ENCODE measurements at regions of chr11 and their contacts with region 1.

Region 1: DNA sequence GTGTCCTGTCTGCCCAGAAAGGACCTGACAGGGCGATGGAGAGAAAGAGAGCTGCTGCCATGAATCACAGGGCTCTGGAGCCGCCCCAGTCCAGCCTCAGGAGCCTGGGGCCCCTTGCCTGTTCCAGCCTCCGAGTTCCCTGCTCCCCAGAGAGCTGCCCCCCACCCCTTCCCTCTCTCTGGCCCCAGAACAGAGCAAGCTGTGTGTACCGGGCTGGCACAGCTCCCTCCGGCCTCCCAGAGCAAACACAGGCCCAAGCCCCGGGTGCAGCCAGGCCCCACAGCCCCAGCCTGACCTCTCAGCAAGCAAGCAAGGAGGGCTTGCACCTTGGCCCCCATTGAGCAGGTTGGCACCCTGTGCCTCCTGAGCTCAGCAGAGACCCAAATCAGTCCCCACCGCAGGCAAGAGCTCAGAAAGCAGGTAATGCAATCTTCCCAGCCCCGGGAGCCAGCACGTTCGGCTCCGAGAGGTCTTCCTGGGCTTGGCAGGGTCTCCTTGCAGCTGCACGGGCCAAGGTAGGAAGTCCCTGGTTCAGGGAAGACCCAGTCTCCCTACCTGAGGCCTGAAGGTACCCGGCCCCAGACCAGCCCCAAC is 1.4 kb downstream of the PACSIN3 start:
- DNase-seq: no peak
- H3K4me3 ChIP-seq: peak overlapping the region; percentile 50 to 91 (median 87)
- H3K27ac ChIP-seq: peak overlapping the region; percentile 79 to 96 (median 84)
- H3K4me1 ChIP-seq: peaks cover 27 to 38% of the 10 kb centered on the region in 2 donors
- H3K27me3 ChIP-seq: no peaks in the 10 kb centered on the region
- CTCF ChIP-seq: no peak
- POLR2A ChIP-seq: no peak

Region 2: GRCh38 chr11:47248664-47249377 is 64.0 kb after region 1 on chr11 and contains the start of gene ACP2:
- intact Hi-C with region 1: loop called (anchors 5 kb)
- DNase-seq: peak; percentile 89 to 91
- H3K4me3 ChIP-seq: peak within 1 kb of the TSS; percentile 23 to 78 (median 44)
- H3K27ac ChIP-seq: peak within 1 kb of the TSS; percentile 23 to 88 (median 81)
- H3K4me1 ChIP-seq: peaks cover 16 to 27% of the 10 kb centered on the region in 2 donors
- H3K27me3 ChIP-seq: no peaks in the 10 kb centered on the region
- CTCF ChIP-seq: peak in 3 of 6 experiments; percentile 25 to 44 (median 39)
- POLR2A ChIP-seq: peak in 1 of 2 donors; percentile 69
- total RNA-seq, gene ACP2: 32.4 to 98.5 (median 73.3) TPM

Region 3: GRCh38 chr11:47264521-47264920 is 79.7 kb after region 1 on chr11:
- intact Hi-C with region 1: loop called (anchors 5 kb)
- DNase-seq: no peak
- H3K4me3 ChIP-seq: no peak overlapping the region
- H3K27ac ChIP-seq: peak overlapping the region in 1 of 3 donors; percentile 29
- H3K4me1 ChIP-seq: peaks cover 4 to 24% of the 10 kb centered on the region in 2 donors
- H3K27me3 ChIP-seq: no peaks in the 10 kb centered on the region
- CTCF ChIP-seq: no peak
- POLR2A ChIP-seq: no peak

Region 4: DNA sequence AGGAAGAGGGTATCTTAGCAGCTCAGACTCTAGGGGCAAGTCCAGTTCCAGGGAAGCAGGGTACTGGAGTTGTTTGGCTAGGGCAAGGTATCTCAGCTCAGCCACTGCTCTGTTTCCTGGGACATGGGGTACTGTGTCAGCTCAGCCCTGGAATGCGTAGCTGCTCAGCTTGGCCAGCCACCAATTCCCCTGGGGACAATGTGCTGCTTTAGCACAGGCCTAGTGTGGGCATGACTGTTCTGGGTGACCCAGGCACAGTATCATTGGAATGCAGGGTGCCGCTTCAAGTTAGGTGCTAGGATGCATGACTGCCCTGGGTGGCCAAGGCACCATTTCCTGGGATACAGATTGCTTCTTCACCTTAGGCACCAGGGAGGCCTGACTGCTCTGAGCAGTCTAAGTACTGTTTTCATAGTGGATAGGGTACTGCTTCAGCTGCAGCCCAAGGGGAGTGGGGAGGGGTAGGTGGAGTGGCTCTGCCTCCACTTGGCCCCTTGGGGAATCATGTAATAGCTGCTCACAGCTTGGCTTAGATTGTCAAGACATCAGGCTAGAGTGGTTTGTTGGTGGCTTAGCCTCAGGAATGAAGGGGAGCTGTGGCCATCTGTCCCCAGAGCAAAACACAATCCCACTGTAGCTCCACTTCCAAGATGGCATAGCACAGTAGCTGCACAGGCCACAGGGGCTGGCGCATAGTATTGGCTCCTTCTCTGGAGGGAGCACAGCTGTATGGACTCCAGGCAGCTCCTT is 121.1 kb after region 1 on chr11:
- intact Hi-C with region 1: no loop called
- DNase-seq: peak; percentile 96 to 97
- H3K4me3 ChIP-seq: no peak overlapping the region
- H3K27ac ChIP-seq: peak overlapping the region; percentile 57 to 84 (median 75)
- H3K4me1 ChIP-seq: peaks cover 7 to 16% of the 10 kb centered on the region in 2 donors
- H3K27me3 ChIP-seq: no peaks in the 10 kb centered on the region
- CTCF ChIP-seq: no peak
- POLR2A ChIP-seq: no peak

Measured in thyroid gland (tissue), 4 donors.